Posterior vena cava (tissue), 2 donors: ENCODE measurements at regions of chr11 and their contacts with region 1.

Region 1: DNA sequence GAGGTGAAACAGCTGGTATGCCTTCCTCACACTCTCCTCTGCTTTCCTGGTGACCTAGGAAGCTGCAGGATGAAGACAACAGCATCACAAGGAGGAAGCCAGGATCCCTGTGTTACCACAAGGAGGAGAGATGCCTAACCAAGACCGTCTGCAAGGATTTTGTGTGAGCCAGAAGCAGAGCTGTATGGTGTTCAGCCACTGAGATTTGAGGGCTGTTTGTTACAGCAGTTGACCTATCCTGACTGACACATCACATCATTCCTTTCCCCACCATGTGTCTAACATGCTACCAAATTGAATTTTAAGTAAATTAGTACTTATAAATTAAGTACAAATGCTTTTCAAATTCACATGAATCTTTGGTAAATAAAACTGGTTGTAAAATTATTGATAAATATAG is 8.9 kb upstream of the CHKA start:
- DNase-seq: no peak

Region 2: DNA sequence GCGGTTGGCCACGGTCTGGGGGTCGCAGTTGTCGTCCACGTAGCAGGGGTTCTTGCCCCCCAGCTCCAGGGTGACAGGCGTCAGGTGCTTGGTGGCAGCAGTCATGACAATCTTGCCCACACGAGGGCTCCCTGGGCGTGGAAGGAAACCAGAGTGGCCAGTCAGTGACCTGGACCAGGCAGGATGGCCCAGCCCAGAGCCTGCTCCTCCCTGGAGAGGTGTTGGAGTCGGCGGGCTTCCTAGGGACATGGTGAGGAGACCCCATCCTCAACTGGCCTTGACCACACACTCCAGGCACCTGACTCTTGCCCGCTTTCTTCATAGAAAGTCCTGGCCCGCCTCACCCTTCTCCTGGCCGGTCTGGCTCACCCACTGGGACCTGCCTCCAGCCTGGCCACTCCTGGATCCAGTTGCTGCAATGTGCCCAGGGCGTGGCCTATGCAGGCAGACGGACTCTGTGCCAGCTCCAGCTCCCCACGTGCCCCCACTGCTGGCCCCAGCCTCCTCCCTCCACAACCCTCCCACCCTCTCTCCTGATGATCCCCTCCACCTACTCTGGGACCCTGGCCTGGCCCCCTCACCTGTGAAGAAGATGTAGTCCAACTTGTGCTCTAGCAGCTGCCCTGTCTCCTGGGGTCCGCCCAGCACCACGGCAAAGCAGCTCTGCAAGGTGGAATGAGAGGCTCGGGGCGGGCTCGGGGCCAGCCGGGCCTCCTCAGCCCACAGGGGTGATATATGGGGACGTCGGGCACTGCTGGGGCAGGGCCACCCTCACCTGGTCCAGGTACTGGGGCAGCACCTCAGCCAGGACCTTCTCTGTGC is 464.4 kb before region 1 on chr11:
- intact Hi-C with region 1: no loop called
- DNase-seq: peak; percentile 77

Region 3: GRCh38 chr11:68684385-68685356 is 554.5 kb after region 1 on chr11 and contains the start of gene GAL:
- intact Hi-C with region 1: loop called in 1 of 2 experiments (anchors 5 kb)
- DNase-seq: peak; percentile 75
- total RNA-seq, gene GAL: 0.52 TPM in 1 of 2 donors, not detected in the other